ENCODE measurements at regions of chr1 and their contacts with region 1.

Region 1: DNA sequence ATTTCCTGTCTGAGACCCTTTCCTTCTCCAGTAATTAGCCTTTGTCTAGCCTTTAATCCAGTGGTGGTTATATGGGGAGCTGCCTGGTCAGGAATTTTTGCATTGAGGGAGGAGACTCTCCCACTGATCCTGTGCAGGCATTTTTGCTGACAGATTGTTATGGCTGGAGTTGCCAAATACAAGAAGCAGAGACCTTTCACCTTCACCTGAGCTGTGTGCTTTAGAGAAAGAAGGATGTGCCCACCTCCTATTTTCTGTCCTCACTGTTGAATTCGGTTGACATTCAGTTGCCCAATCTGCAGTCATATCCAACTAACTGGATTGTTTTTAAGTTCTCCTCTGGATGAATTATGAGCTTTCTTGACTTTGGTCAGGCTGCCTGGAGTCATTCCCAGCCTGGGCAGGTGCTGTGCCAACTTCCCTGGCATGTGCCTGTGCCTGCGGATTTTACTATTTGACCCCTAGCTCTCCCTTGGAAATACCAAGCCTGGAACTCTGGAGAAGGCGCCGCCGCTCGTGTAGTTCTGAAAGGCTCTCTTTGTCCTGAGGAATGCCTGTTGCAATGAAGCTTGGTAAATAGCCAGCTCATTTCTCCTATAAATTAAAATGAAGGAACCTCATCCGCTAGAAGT is 143.9 kb downstream of the NOS1AP start:
- DNase-seq: peak; percentile 92
- H3K4me3 ChIP-seq: no peak overlapping the region
- H3K27ac ChIP-seq: peak overlapping the region; percentile 70 to 86 (median 78)
- H3K4me1 ChIP-seq: peaks cover 0 to 98% (median 82%) of the 10 kb centered on the region in 4 donors
- H3K27me3 ChIP-seq: no peaks in the 10 kb centered on the region
- CTCF ChIP-seq: no peak
- EP300 ChIP-seq: peak in 3 of 4 donors; percentile 29 to 52 (median 39)
- POLR2A ChIP-seq: no peak

Region 2: GRCh38 chr1:162069328-162070093 is 143.9 kb before region 1 on chr1 and contains the start of gene NOS1AP:
- intact Hi-C with region 1: loop called (anchors 5 kb)
- DNase-seq: peak; percentile 82
- H3K4me3 ChIP-seq: peak within 1 kb of the TSS; percentile 40 to 93 (median 82)
- H3K27ac ChIP-seq: peak within 1 kb of the TSS; percentile 59 to 81 (median 76)
- H3K4me1 ChIP-seq: peaks cover 0 to 36% (median 22%) of the 10 kb centered on the region in 4 donors
- H3K27me3 ChIP-seq: peaks cover 0 to 4% (median 0%) of the 10 kb centered on the region in 3 donors
- CTCF ChIP-seq: no peak
- EP300 ChIP-seq: no peak
- POLR2A ChIP-seq: no peak
- total RNA-seq, gene NOS1AP: 4.6 to 11.9 (median 7.2) TPM

Region 3: DNA sequence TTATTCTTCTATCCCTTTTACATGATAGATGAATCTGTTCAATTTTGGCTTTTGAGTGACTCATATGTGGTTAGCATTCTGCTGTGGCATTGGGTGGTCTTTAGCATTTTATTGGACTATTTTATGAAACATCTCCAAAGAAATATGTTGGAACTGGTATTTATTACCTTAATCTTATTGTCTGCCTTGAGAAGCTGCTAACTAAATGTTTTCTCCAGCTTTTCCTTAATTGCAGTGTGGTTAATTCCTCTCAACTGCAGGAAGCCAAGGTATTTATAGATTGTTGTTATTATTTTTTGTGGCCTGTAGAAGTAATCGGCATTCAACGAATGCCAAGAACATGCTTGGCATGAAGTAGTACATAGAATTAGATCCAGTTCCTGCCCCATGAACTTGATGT is 79.8 kb before region 1 on chr1:
- intact Hi-C with region 1: loop called (anchors 5 kb)
- DNase-seq: no peak
- H3K4me3 ChIP-seq: no peak overlapping the region
- H3K27ac ChIP-seq: peak overlapping the region in 1 of 4 donors; percentile 0
- H3K4me1 ChIP-seq: peaks cover 0 to 83% (median 51%) of the 10 kb centered on the region in 4 donors
- H3K27me3 ChIP-seq: no peaks in the 10 kb centered on the region
- CTCF ChIP-seq: no peak
- EP300 ChIP-seq: no peak
- POLR2A ChIP-seq: no peak